ENCODE measurements at regions of chrX and their contacts with region 1.

Region 1: DNA sequence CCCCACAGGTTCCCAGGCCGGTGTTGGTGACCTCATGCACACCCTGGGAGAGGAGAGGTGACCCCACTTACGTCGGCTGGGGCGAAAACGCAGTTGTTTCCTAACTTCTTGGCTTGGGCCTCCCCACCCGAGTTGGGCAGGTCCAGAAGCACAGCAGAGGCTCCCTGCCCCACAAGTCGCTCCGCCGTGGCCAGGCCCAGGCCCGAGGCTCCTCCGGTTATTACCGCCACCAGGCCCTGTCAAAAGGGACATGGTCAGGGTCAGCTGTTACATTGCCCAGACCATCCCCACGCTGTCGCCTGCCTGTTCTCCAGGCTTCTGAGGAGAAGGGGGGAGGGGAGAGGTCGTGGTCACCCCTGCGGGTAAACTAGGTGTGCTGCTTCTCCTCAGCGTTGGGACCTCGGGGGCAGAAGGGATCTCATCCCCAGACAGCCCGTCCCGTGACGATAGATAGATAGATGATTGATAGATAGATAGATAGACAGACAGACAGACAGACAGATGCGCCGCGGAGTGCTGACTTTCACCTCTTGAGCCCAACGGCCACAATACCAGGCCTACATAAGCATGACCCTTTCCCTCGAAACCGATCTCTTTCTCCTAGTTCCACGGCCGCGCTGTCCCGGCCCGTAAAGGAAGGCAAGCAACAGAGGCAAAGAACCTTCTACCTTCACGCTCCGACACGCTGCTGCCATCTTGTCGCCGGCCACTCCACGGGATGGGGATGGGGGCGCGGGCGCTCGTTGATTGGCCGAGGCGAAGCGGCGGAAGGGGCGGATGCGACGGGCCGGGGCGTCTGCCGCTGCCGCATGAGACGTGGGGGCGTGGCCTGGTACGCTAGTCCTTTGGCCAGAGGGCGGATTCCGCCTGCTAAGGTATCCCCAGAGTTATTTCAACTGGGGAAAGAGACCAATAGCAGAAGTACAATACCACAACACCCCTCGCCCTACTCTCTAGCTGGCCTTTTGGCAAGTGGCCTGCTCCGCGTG is at the start of gene HSD17B10:
- DNase-seq: peak; percentile 95
- total RNA-seq, gene HSD17B10: 85.2 TPM

Region 2: DNA sequence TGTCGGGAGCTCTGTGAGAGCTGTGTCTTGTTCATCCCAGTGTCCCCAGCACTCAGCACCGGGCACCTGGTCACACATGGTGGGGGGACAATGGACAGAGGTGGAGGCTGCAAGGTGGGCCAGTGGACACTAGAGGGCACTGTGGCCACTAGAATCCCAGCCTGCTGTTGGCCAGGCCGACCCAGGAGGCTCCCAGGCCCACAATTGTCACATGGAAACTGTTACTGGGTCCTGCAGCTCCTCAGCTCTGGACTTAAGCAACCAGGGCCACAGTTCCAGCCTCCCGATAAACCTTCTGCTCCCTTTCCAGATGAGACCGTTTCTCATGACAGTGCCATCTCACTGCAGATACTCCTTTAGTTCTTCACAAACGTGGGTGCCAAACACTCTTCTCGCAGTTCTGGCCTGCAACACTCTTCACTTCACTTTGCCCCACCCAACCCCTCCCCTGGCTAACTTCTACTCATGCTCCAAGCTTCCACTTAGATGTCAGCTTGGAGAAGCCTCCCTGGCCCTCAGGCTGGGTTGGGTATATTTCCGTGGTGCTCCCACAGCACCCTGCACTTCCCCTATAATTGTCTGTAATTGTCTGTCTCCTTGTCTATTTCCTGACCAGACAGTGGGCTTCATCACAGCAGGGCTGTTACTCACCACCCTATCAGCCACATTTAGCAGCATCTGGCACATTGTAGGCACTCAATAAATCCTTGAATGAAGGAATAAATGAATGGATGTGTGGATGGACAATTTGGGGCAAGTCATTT is 149.1 kb before region 1 on chrX:
- intact Hi-C with region 1: loop called (anchors 10 kb)
- DNase-seq: peak; percentile 83

Region 3: GRCh38 chrX:53317365-53318069 is 116.4 kb before region 1 on chrX:
- intact Hi-C with region 1: loop called (anchors 2 kb)
- DNase-seq: peak; percentile 84

Measured in cardiac septum (tissue), 1 donor.